PC-9 (cell line): ENCODE measurements at regions of chr6 and their contacts with region 1.

Region 1: GRCh38 chr6:87799651-87800050 is 97.6 kb upstream of the AKIRIN2 start:
- DNase-seq: no peak
- H3K4me3 ChIP-seq: no peak overlapping the region
- H3K27ac ChIP-seq: no peak overlapping the region
- H3K4me1 ChIP-seq: no peaks in the 10 kb centered on the region
- H3K27me3 ChIP-seq: no peaks in the 10 kb centered on the region
- CTCF ChIP-seq: no peak

Region 2: DNA sequence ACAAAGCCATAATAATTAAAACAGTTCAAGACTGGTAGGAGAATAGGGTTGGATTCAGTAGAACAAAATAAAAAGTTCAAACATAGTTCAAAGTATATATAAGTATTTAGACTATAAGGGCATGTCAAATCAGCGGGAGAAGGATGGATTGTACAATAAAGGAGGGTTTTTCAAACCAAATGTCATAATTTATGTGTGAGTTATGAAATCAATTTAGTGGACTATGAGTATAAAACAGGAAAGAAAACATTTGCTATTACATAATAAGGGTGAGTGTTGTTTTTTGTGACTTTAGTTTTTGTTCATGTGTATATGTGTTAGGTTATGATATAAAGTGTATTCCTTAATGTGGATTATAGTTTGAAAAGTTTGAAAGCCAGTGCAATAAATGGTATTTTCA is 199.1 kb before region 1 on chr6:
- CTCF ChIA-PET with region 1: no interaction called
- POLR2A ChIA-PET with region 1: no interaction called
- intact Hi-C with region 1: loop called (anchors 10 kb)
- DNase-seq: no peak
- H3K4me3 ChIP-seq: no peak overlapping the region
- H3K27ac ChIP-seq: no peak overlapping the region
- H3K4me1 ChIP-seq: no peaks in the 10 kb centered on the region
- H3K27me3 ChIP-seq: no peaks in the 10 kb centered on the region
- CTCF ChIP-seq: no peak